ENCODE measurements at regions of chr19 and their contacts with region 1.

Region 1: GRCh38 chr19:49301165-49301865 is 23.7 kb downstream of the SLC6A16 start:
- DNase-seq: peak; percentile 81
- ATAC-seq: peak; percentile 99
- H3K4me3 Mint-ChIP-seq: peak overlapping the region; percentile 64
- H3K27ac Mint-ChIP-seq: peak overlapping the region; percentile 7
- H3K4me1 Mint-ChIP-seq: peaks cover 21% of the 10 kb centered on the region
- H3K27me3 Mint-ChIP-seq: no peaks in the 10 kb centered on the region
- CTCF ChIP-seq: no peak

Region 2: DNA sequence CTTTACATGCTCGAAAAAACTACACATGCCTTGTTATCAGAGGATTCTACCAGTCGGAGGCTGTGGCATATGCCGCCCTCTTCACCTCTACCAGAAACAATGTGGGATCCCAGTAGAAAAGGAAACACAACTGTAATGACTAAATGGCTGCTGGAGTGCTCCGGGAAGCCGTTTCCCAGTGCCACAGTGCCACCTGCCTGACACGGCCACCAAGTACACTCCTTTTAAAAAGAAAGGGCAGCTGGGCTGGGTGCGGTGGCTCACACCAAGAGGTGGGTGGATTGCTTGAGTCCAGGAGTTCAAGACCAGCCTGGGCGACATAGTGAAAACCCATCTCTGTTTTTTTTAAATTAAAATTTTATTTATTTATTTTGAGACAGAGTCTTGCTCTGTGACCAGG is 76.5 kb before region 1 on chr19:
- CTCF ChIA-PET with region 1: interaction called, 17 read pairs
- POLR2A ChIA-PET with region 1: no interaction called
- intact Hi-C with region 1: loop called (anchors 2 kb)
- DNase-seq: no peak
- ATAC-seq: peak; percentile 54
- H3K4me3 Mint-ChIP-seq: no peak overlapping the region
- H3K27ac Mint-ChIP-seq: no peak overlapping the region
- H3K4me1 Mint-ChIP-seq: peaks cover 6% of the 10 kb centered on the region
- H3K27me3 Mint-ChIP-seq: peaks cover 6% of the 10 kb centered on the region
- CTCF ChIP-seq: no peak

Region 3: DNA sequence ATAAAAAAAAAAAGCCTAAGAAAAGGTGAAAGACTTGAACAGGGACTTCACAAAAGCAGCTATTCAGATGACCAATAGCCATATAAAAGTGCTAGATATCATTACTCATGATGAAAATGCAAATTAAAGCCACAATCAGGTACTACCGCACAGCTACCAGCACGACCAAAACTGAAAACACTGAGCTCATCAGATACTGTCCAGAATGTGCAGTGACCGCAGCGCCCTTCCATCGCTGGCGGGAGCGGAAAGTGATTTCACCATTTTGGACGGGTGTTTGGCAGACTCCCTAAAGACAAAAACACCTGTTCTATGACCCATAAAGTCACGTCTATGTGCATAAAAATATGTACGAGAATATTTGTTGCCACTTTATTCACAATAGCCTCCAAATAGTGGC is 37.1 kb before region 1 on chr19:
- CTCF ChIA-PET with region 1: interaction called, 10 read pairs
- POLR2A ChIA-PET with region 1: no interaction called
- intact Hi-C with region 1: loop called (anchors 2 kb)
- DNase-seq: no peak
- ATAC-seq: no peak
- H3K4me3 Mint-ChIP-seq: no peak overlapping the region
- H3K27ac Mint-ChIP-seq: no peak overlapping the region
- H3K4me1 Mint-ChIP-seq: peaks cover 6% of the 10 kb centered on the region
- H3K27me3 Mint-ChIP-seq: peaks cover 13% of the 10 kb centered on the region
- CTCF ChIP-seq: no peak

Region 4: DNA sequence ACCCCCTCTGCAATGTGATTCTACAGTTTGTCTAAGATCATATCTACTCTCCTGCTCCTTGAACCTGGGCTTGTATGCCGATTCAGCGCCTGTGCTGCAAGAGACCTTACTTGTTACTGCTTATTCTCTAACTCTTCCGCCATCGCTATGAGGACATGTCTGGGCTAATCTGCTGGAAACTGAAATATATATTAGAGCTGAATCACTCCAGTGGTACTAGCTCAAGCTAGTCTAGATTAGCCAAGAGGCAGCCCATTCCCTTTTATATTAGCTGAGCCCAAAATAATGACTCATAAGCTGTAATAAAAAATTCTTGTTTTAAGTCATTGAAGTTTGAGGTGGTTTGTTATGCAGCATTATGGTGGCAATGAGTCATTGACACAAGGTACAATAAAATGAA is 29.1 kb before region 1 on chr19:
- CTCF ChIA-PET with region 1: interaction called, 5 read pairs
- POLR2A ChIA-PET with region 1: interaction called, 5 read pairs
- intact Hi-C with region 1: loop called (anchors 2 kb)
- DNase-seq: no peak
- ATAC-seq: no peak
- H3K4me3 Mint-ChIP-seq: no peak overlapping the region
- H3K27ac Mint-ChIP-seq: no peak overlapping the region
- H3K4me1 Mint-ChIP-seq: no peaks in the 10 kb centered on the region
- H3K27me3 Mint-ChIP-seq: peaks cover 11% of the 10 kb centered on the region
- CTCF ChIP-seq: no peak

Region 5: DNA sequence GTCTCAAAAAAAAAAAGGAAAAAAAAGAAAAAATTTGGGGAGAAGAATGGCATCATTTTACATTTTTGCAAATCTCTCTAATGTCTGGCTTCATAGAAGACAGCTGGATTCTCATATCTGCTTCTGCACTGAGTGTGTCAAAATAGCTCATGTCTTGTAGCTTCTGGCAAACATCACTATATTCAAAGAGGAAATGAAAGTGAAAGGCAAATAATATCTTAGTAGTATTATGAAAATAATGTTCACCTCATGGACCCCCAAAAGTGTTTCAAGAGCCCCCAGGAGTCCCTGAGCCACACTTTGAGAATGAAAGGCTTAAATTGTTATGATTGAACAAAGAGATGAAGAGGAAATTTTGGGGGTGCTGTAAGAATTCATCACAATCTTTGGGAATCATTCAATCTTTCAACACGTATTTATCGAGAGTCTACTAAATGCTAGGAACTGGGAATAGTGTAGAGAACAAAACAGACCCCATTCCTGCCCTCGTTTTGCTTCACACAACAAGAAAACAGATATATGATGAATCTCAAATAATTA is 24.9 kb after region 1 on chr19:
- CTCF ChIA-PET with region 1: interaction called, 24 read pairs
- POLR2A ChIA-PET with region 1: interaction called, 36 read pairs
- intact Hi-C with region 1: loop called (anchors 1 kb)
- DNase-seq: no peak
- ATAC-seq: peak; percentile 51
- H3K4me3 Mint-ChIP-seq: peak overlapping the region; percentile 56
- H3K27ac Mint-ChIP-seq: peak overlapping the region; percentile 100
- H3K4me1 Mint-ChIP-seq: peaks cover 84% of the 10 kb centered on the region
- H3K27me3 Mint-ChIP-seq: no peaks in the 10 kb centered on the region
- CTCF ChIP-seq: no peak

Region 6: DNA sequence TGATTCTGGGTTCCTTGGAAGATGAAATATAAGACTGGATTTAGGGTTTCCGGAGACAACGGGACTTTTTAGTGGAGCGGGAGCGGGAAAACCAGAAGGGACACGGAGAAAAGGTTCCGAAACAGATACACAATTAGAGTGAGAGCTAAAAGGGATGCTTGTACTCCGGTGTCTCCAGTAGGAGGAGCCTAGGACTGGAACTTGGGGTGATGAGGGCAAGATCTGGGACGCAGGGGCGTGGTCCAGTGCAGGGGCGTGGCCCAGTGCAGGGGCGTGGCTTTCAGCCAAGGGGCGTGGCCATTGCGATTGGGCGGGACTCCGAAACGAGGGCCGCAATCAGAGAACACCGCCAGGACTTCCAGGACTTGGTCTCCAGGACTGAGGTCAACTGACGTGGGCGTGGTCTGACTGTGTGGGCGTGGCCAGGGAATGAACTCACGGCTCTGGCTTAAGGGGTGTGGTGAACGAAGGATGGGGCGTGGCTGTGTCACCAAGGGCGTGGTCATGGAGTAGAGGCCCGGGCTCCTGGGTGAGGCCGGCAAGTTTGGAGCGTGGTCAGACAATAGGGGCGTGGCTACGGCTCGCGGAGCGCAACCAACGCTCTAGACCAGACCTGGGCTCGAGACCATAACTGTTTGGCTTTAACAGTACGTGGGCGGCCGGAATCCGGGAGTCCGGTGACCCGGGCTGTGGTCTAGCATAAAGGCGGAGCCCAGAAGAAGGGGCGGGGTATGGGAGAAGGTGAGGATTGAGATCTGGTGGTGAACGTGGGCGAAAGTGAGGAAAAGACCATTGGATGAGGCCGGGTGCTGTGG is 62.2 kb after region 1 on chr19 and contains the start of gene DKKL1:
- CTCF ChIA-PET with region 1: interaction called, 4 read pairs
- POLR2A ChIA-PET with region 1: interaction called, 5 read pairs
- intact Hi-C with region 1: loop called (anchors 2 kb)
- DNase-seq: peak; percentile 94
- ATAC-seq: peak; percentile 85
- H3K4me3 Mint-ChIP-seq: peak within 1 kb of the TSS; percentile 29
- H3K27ac Mint-ChIP-seq: no peak within 1 kb of the TSS
- H3K4me1 Mint-ChIP-seq: peaks cover 31% of the 10 kb centered on the region
- H3K27me3 Mint-ChIP-seq: no peaks in the 10 kb centered on the region
- CTCF ChIP-seq: no peak
- total RNA-seq, gene DKKL1: 0.71 and 0.76 TPM in 2 replicates

Region 7: GRCh38 chr19:49380391-49380790 is 79.1 kb after region 1 on chr19:
- CTCF ChIA-PET with region 1: interaction called, 10 read pairs
- POLR2A ChIA-PET with region 1: interaction called, 5 read pairs
- intact Hi-C with region 1: no loop called
- DNase-seq: no peak
- ATAC-seq: no peak
- H3K4me3 Mint-ChIP-seq: no peak overlapping the region
- H3K27ac Mint-ChIP-seq: no peak overlapping the region
- H3K4me1 Mint-ChIP-seq: no peaks in the 10 kb centered on the region
- H3K27me3 Mint-ChIP-seq: no peaks in the 10 kb centered on the region
- CTCF ChIP-seq: no peak